Panc1 (cell line): ENCODE measurements at regions of chr1 and their contacts with region 1.

Region 1: GRCh38 chr1:94160811-94161210 is 39.9 kb upstream of the ABCA4 start:
- DNase-seq: no peak
- ATAC-seq: no peak; the same call in 1 of the 2 replicates
- H3K4me3 ChIP-seq: no peak overlapping the region
- H3K27ac ChIP-seq: peak overlapping the region; percentile 58
- H3K4me1 ChIP-seq: peaks cover 3% of the 10 kb centered on the region
- H3K27me3 ChIP-seq: no peaks in the 10 kb centered on the region
- CTCF ChIP-seq: no peak

Region 2: DNA sequence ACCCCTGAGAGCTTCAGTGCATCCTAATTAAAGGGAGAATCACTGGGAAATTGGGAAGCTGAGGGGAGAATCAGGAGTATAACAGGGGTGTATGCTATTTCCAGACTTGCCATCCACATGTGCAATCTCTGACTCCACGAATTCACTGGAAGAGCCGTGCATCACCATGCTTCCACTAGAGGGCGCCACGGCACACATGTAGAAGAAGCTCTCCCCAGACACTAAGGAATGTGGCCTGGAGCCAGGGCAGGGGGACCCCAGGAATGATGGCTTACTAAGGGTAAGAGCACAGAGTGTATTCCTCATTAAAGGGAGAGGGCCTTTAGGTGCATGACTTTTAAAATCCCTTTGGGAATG is 121.3 kb before region 1 on chr1:
- CTCF ChIA-PET with region 1: no interaction called
- POLR2A ChIA-PET with region 1: interaction called, 13 read pairs
- in situ Hi-C with region 1: no loop called
- intact Hi-C with region 1: no loop called
- DNase-seq: peak; percentile 47
- ATAC-seq: peak; percentile 78
- H3K4me3 ChIP-seq: no peak overlapping the region
- H3K27ac ChIP-seq: peak overlapping the region; percentile 70
- H3K4me1 ChIP-seq: peaks cover 11% of the 10 kb centered on the region
- H3K27me3 ChIP-seq: no peaks in the 10 kb centered on the region
- CTCF ChIP-seq: peak; percentile 91

Region 3: GRCh38 chr1:94061513-94062443 is 99.0 kb before region 1 on chr1:
- CTCF ChIA-PET with region 1: no interaction called
- POLR2A ChIA-PET with region 1: no interaction called
- in situ Hi-C with region 1: no loop called
- intact Hi-C with region 1: loop called (anchors 5 kb)
- DNase-seq: peak; percentile 66
- ATAC-seq: peak; percentile 93
- H3K4me3 ChIP-seq: no peak overlapping the region
- H3K27ac ChIP-seq: peak overlapping the region; percentile 99
- H3K4me1 ChIP-seq: peaks cover 6% of the 10 kb centered on the region
- H3K27me3 ChIP-seq: no peaks in the 10 kb centered on the region
- CTCF ChIP-seq: peak; percentile 81